Activated CD8-positive, alpha-beta T cell treated with anti-CD3 and anti-CD28 coated beads, Interleukin-2, amount 10 ng/mL, durations not matched to agents 7 days and 5 days (primary cell): ENCODE measurements at regions of chr17 and their contacts with region 1.

Region 1: GRCh38 chr17:57671667-57672632 is 73.1 kb downstream of the CCDC182 start:
- DNase-seq: peak; percentile 87
- ATAC-seq: peak; percentile 93
- H3K4me3 Mint-ChIP-seq: peak overlapping the region; percentile 66
- H3K27ac Mint-ChIP-seq: peak overlapping the region; percentile 96
- H3K4me1 Mint-ChIP-seq: peaks cover 66% of the 10 kb centered on the region
- H3K27me3 Mint-ChIP-seq: no peaks in the 10 kb centered on the region

Region 2: DNA sequence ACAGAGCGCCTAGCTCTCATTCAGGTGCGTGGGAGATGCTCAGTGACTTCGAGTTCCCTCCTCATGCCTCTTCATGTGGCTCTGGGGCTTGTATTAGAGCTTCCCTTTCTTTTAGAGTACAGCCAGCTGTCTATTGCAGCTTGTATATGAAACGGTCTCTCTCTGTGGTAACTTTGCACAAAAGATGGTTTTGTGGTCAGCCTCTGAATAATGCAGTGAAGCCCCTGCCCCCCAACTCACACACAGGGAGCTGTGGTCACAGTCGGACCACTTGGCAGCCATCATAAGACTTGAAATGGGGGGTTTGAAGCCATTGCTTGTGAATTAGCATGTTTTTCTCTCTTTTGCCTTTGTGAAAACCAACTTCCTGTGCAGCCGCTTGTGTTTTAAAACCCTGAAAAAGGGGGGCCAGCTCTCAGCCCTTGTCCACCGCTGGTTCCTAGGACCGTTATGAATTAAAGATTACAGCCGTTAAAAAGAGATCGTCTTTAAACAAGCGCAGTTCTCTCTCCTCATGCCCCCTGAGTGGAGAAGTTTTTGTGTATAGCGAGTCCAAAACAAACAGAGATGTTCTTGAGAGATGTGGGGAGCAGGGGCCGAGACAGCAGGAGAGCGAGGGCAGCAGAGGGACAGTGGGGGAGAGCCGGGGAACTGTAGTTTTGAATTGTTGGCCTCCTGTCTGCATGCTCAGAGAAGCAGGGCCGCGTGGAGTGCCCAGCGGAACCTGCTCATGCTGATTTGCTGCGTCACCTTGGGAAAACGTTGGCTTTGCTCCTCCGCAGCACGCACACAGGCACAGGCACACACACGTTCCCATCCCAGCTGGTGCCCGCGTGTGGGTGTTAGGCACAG is 216.7 kb before region 1 on chr17:
- CTCF ChIA-PET with region 1: interaction called, 15 read pairs
- POLR2A ChIA-PET with region 1: no interaction called
- DNase-seq: peak; percentile 86
- ATAC-seq: peak; percentile 85
- H3K4me3 Mint-ChIP-seq: peak overlapping the region; percentile 57
- H3K27ac Mint-ChIP-seq: peak overlapping the region; percentile 87
- H3K4me1 Mint-ChIP-seq: peaks cover 79% of the 10 kb centered on the region
- H3K27me3 Mint-ChIP-seq: no peaks in the 10 kb centered on the region

Region 3: GRCh38 chr17:57622683-57623433 is 49.1 kb before region 1 on chr17:
- CTCF ChIA-PET with region 1: interaction called, 19 read pairs
- POLR2A ChIA-PET with region 1: no interaction called
- DNase-seq: no peak
- ATAC-seq: no peak
- H3K4me3 Mint-ChIP-seq: no peak overlapping the region
- H3K27ac Mint-ChIP-seq: peak overlapping the region; percentile 27
- H3K4me1 Mint-ChIP-seq: peaks cover 41% of the 10 kb centered on the region
- H3K27me3 Mint-ChIP-seq: no peaks in the 10 kb centered on the region

Region 4: GRCh38 chr17:57685505-57686132 is 13.7 kb after region 1 on chr17:
- CTCF ChIA-PET with region 1: interaction called, 24 read pairs
- POLR2A ChIA-PET with region 1: no interaction called
- DNase-seq: peak; percentile 17
- ATAC-seq: no peak
- H3K4me3 Mint-ChIP-seq: no peak overlapping the region
- H3K27ac Mint-ChIP-seq: no peak overlapping the region
- H3K4me1 Mint-ChIP-seq: no peaks in the 10 kb centered on the region
- H3K27me3 Mint-ChIP-seq: peaks cover 4% of the 10 kb centered on the region

Region 5: DNA sequence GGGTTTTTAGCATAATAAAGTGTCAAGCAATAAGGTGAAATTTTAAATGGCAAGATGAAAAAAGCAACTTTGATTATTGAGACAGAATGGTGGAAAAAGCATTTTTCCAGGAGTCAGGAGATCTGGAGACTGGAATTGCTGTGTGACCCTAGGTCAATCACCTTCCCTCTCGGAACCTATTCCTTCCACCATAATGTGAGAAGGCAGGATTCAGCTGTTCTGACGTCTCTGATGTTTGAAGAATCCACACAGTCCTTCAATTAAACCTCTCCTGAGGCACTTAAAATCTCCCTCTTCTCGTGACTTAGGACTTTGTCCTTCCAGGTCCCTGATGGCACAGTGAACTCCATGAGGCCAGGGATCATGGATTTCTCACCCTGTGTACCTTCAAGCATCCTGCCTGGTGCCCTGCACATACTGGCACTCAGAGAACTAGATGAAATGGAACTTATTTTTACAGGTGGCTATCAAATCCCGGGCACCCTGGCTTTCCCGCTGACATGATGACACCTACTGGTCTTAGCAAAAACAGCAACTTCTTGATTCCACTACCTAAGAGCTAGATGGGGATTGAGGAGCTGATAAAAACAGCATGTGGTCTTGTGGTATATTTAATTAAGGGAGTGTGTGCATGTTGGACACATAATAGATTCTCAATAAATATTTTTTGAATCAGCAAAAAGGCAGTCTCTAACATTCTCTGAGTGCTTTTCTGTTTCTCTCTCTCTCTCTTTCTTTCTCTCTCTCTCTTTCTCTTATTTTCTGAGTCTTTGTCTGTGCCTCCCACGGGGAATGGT is 75.5 kb after region 1 on chr17:
- CTCF ChIA-PET with region 1: interaction called, 15 read pairs
- POLR2A ChIA-PET with region 1: no interaction called
- DNase-seq: peak; percentile 68
- ATAC-seq: peak; percentile 77
- H3K4me3 Mint-ChIP-seq: no peak overlapping the region
- H3K27ac Mint-ChIP-seq: no peak overlapping the region
- H3K4me1 Mint-ChIP-seq: peaks cover 29% of the 10 kb centered on the region
- H3K27me3 Mint-ChIP-seq: peaks cover 7% of the 10 kb centered on the region